Caco-2 (cell line): ENCODE measurements at regions of chr18 and their contacts with region 1.

Region 1: GRCh38 chr18:33195795-33196194 is 244.7 kb downstream of the CCDC178 start:
- DNase-seq: peak; percentile 21 to 33
- H3K4me3 ChIP-seq: no peak overlapping the region
- H3K4me3 Mint-ChIP-seq: no peak overlapping the region
- H3K27ac Mint-ChIP-seq: peak overlapping the region; percentile 12
- H3K4me1 ChIP-seq: no peaks in the 10 kb centered on the region
- H3K4me1 Mint-ChIP-seq: no peaks in the 10 kb centered on the region
- H3K27me3 ChIP-seq: no peaks in the 10 kb centered on the region
- H3K27me3 Mint-ChIP-seq: no peaks in the 10 kb centered on the region
- CTCF ChIP-seq: no peak

Region 2: DNA sequence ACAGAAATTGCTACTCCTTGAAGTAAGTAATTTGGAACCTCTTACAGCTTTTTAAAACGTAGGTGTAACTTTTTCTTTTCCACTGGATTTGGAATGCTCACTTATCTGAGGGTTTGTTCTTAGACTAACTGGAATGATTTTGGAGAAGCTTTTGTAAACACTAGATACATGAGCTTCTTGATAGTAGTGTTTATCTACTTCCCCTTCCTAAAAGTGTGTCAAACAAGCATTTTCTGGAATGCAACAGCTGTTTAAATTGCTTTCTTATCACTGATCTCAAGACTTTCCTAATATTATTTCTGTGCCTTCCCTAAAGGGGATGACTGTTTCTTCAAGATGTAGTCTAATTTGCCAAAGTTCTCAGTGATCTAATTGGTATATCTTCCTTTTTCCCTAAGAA is 37.9 kb before region 1 on chr18:
- CTCF ChIA-PET with region 1: no interaction called
- POLR2A ChIA-PET with region 1: no interaction called
- intact Hi-C with region 1: loop called (anchors 5 kb)
- DNase-seq: no peak
- H3K4me3 ChIP-seq: no peak overlapping the region
- H3K4me3 Mint-ChIP-seq: no peak overlapping the region
- H3K27ac Mint-ChIP-seq: no peak overlapping the region
- H3K4me1 ChIP-seq: no peaks in the 10 kb centered on the region
- H3K4me1 Mint-ChIP-seq: no peaks in the 10 kb centered on the region
- H3K27me3 ChIP-seq: no peaks in the 10 kb centered on the region
- H3K27me3 Mint-ChIP-seq: no peaks in the 10 kb centered on the region
- CTCF ChIP-seq: no peak

Region 3: DNA sequence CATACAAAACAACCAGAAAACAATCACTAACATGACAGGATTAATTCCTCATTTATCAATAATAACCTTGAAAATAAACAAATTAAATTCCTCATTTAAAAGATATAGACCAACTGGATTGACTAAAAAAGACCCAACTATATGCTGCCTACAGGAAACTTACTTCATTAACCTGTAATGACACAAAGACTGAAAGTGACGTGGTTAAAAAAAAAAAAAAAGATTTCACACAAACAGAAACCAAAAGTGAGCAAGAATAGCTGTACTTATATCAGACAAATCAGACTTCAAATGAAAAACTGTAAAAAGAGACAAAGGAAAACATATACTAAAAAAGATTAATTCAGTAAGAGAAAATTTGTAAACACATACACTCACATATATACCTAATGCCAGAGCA is 43.5 kb after region 1 on chr18:
- CTCF ChIA-PET with region 1: no interaction called
- POLR2A ChIA-PET with region 1: no interaction called
- intact Hi-C with region 1: no loop called
- DNase-seq: no peak
- H3K4me3 ChIP-seq: no peak overlapping the region
- H3K4me3 Mint-ChIP-seq: no peak overlapping the region
- H3K27ac Mint-ChIP-seq: no peak overlapping the region
- H3K4me1 ChIP-seq: no peaks in the 10 kb centered on the region
- H3K4me1 Mint-ChIP-seq: no peaks in the 10 kb centered on the region
- H3K27me3 ChIP-seq: no peaks in the 10 kb centered on the region
- H3K27me3 Mint-ChIP-seq: no peaks in the 10 kb centered on the region
- CTCF ChIP-seq: no peak